Posterior cingulate gyrus (tissue), 11 donors: ENCODE measurements at regions of chr2 and their contacts with region 1.

Region 1: GRCh38 chr2:133780099-133780839 is 212.0 kb upstream of the NCKAP5 start:
- DNase-seq: peak in 5 of 10 donors; percentile 18 to 57 (median 39)

Region 2: GRCh38 chr2:133266041-133266925 is 514.0 kb before region 1 on chr2:
- intact Hi-C with region 1: loop called (anchors 10 kb)
- DNase-seq: peak in 3 of 10 donors; percentile 72 to 84 (median 83)

Region 3: GRCh38 chr2:133674433-133675331 is 105.6 kb before region 1 on chr2:
- intact Hi-C with region 1: loop called (anchors 5 kb)
- DNase-seq: peak; percentile 45 to 92 (median 71)

Region 4: DNA sequence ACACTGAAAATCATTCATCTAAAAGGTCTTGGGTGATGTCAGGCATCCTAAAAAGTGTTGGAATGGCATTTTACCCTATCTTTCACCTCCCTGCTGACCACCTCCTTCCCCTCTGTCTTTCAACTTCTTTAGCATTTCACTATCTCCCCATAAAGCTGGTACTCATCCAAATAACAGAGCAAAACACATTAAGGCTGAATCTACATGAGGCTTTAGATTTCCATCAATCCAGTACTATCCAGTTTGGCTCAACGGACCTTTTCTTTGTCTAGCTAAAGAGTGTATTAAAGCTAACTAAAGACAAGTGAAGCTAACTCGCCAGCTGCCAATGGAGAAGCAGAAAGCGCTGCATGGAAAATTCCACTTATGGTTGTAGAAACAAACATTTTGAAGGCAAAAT is 89.5 kb before region 1 on chr2:
- intact Hi-C with region 1: no loop called
- DNase-seq: no peak

Region 5: DNA sequence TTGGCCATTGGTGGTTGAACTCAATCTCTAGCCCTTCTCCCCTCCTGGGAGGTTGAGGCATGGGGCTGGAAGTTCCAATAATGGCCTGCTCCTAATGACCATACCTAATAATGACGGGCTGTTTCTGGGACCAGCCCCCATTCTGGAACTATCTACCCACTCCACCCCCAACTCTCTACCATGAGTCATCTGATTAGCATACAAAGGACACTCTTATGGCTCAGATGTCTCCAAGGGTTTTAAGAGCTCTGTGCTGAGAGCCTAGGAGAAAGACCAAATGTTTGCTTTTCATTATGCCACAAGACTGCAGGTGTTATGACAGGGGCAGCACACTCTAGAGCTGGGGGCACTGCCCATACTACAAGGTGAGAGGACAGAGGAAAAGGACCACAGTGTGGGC is 75.0 kb before region 1 on chr2:
- intact Hi-C with region 1: no loop called
- DNase-seq: no peak

Region 6: GRCh38 chr2:133862400-133862977 is 82.2 kb after region 1 on chr2:
- intact Hi-C with region 1: no loop called
- DNase-seq: no peak